ENCODE measurements at regions of chr12 and their contacts with region 1.

Region 1: GRCh38 chr12:75526655-75527511 is 15.5 kb upstream of the KRR1 start:
- DNase-seq: peak in 2 of 5 donors; percentile 79 to 84
- H3K4me3 ChIP-seq: no peak overlapping the region
- H3K27ac ChIP-seq: no peak overlapping the region
- H3K4me1 ChIP-seq: no peaks in the 10 kb centered on the region
- H3K27me3 ChIP-seq: no peaks in the 10 kb centered on the region
- CTCF ChIP-seq: peak; percentile 50

Region 2: DNA sequence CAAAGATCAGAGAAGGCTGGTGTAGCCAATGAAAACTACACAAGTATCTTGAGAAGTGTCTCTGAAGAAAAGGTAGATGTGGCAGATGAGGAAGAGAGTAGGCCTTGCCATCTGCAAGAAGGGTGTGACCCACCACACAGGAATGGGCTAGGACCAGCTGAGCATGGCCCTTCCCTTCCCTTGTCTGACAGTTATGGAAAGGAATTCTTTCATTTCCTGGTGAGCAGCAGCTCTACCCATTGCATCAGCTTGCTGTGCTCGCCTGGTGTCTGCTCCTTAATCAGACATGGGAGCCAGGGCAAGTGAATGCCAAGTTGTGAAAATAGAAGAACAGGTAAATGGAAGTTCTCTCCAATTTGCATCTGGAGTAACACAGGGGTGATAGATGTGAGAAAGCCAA is 129.8 kb after region 1 on chr12:
- intact Hi-C with region 1: no loop called
- DNase-seq: no peak
- H3K4me3 ChIP-seq: no peak overlapping the region
- H3K27ac ChIP-seq: no peak overlapping the region
- H3K4me1 ChIP-seq: no peaks in the 10 kb centered on the region
- H3K27me3 ChIP-seq: no peaks in the 10 kb centered on the region
- CTCF ChIP-seq: no peak

Region 3: GRCh38 chr12:76031537-76032073 is 504.7 kb after region 1 on chr12 and contains the start of gene PHLDA1:
- intact Hi-C with region 1: loop called (anchors 10 kb)
- DNase-seq: peak; percentile 98 to 99 (median 99)
- H3K4me3 ChIP-seq: peak within 1 kb of the TSS; percentile 80 to 98 (median 94)
- H3K27ac ChIP-seq: peak within 1 kb of the TSS; percentile 95
- H3K4me1 ChIP-seq: peaks cover 0 to 6% (median 0%) of the 10 kb centered on the region in 3 donors
- H3K27me3 ChIP-seq: no peaks in the 10 kb centered on the region
- CTCF ChIP-seq: peak; percentile 61
- total RNA-seq, gene PHLDA1: 15.3 TPM

Measured in kidney (tissue), 22 donors.